GM10248 (cell line): ENCODE measurements at regions of chr12 and their contacts with region 1.

Region 1: GRCh38 chr12:101792051-101792931 is 38.5 kb downstream of the GNPTAB start:
- DNase-seq: no peak
- CTCF ChIP-seq: peak; percentile 31

Region 2: GRCh38 chr12:101733166-101733565 is 59.1 kb before region 1 on chr12:
- CTCF ChIA-PET with region 1: no interaction called
- POLR2A ChIA-PET with region 1: no interaction called
- DNase-seq: no peak
- CTCF ChIP-seq: no peak

Region 3: GRCh38 chr12:101764051-101764794 is 28.1 kb before region 1 on chr12:
- CTCF ChIA-PET with region 1: no interaction called
- POLR2A ChIA-PET with region 1: no interaction called
- DNase-seq: no peak
- CTCF ChIP-seq: no peak

Region 4: GRCh38 chr12:101813117-101813516 is 20.8 kb after region 1 on chr12:
- CTCF ChIA-PET with region 1: interaction called, 13 read pairs
- POLR2A ChIA-PET with region 1: no interaction called
- DNase-seq: no peak
- CTCF ChIP-seq: no peak

Region 5: DNA sequence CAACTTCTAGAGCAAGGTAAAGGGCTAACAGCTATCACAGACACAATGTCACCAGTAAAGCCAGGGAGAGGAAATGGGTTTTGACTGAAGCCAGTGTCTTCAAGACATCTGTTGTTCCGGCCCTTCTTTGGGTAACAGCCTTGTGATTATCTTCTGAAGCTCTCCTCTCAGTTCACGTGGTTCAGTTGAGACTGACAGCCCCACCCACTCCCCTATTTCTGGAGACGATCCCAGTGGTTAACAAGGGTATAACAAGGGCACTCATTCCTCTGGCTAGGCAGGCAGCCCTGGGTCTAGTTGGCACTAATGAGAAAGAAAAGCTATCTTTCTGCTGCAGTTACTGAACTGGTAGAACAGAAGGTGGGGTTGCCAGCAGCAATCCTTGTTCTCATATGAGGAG is 31.6 kb after region 1 on chr12:
- CTCF ChIA-PET with region 1: interaction called, 23 read pairs
- POLR2A ChIA-PET with region 1: no interaction called
- DNase-seq: peak; percentile 60
- CTCF ChIP-seq: peak; percentile 3

Region 6: GRCh38 chr12:101830367-101831325 is 38.4 kb after region 1 on chr12 and contains the start of gene GNPTAB:
- CTCF ChIA-PET with region 1: interaction called, 23 read pairs
- POLR2A ChIA-PET with region 1: no interaction called
- DNase-seq: peak; percentile 96
- CTCF ChIP-seq: peak; percentile 89

Region 7: DNA sequence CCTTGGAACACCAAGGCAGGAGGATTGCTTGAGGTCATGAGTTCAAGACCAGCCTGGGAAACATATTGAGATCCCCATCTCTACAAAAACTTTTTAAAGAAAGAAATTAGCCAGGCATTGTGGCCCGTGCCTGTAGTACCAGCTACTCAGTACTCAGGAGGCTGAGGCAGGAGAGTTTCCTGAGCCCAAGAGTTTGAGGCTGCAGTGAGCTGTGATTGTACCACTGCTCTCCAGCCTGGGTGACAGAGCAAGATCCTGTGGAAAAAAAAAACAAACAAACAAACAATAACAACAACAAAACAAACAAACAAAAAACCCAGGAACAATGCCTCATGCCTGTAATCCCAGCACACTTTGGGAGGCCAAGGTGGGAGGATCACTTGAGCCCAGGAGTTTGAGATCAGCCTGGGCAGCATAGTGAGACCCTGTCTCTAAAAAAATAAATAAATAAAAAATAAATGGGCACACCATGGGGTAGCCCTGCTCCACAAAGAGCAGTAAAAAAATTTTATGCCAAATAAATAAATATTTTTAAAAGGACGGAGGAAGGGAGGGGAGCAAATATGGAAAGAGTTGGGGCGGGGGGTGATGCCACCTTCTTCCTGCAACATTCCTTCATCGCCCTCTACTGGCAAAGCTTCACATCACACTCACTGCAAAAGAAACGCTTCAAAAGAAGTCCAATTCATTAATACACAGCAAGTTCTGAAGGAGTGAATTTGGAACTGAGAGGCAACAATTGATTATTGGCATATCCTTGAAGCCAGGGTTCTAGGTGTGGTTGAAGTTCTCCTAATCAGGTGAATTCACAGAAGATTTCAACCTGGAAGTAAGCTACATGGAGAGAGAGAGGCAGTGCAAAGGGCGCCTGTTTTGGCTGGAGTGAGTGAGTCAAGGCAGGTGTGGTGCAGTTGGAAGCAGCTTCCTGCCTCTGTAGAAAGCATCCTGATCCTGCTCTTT is 47.3 kb after region 1 on chr12:
- CTCF ChIA-PET with region 1: interaction called, 14 read pairs
- POLR2A ChIA-PET with region 1: no interaction called
- DNase-seq: peak; percentile 56
- CTCF ChIP-seq: peak; percentile 78